ENCODE measurements at regions of chr15 and their contacts with region 1.

Region 1: GRCh38 chr15:67303490-67304363 is 49.1 kb downstream of the IQCH start:
- H3K4me3 ChIP-seq: no peak overlapping the region
- H3K27ac ChIP-seq: no peak overlapping the region
- H3K4me1 ChIP-seq: peaks cover 9% of the 10 kb centered on the region; the same call in 1 of the 2 replicates
- CTCF ChIP-seq: peak; percentile 30; the same call in 1 of the 2 replicates

Region 2: GRCh38 chr15:67240235-67241131 is 63.2 kb before region 1 on chr15:
- CTCF ChIA-PET with region 1: interaction called, 19 read pairs
- POLR2A ChIA-PET with region 1: no interaction called
- H3K4me3 ChIP-seq: no peak overlapping the region
- H3K27ac ChIP-seq: no peak overlapping the region
- H3K4me1 ChIP-seq: peaks cover 22% of the 10 kb centered on the region
- CTCF ChIP-seq: peak; percentile 40

Region 3: GRCh38 chr15:67340630-67341029 is 36.9 kb after region 1 on chr15:
- CTCF ChIA-PET with region 1: no interaction called
- POLR2A ChIA-PET with region 1: no interaction called
- H3K4me3 ChIP-seq: no peak overlapping the region
- H3K27ac ChIP-seq: no peak overlapping the region
- H3K4me1 ChIP-seq: no peaks in the 10 kb centered on the region
- CTCF ChIP-seq: no peak

Measured in HEK293 (cell line).